ENCODE measurements at regions of chr11 and their contacts with region 1.

Region 1: GRCh38 chr11:44936525-44936924 is 14.2 kb downstream of the TP53I11 start:
- DNase-seq: peak; percentile 80

Region 2: DNA sequence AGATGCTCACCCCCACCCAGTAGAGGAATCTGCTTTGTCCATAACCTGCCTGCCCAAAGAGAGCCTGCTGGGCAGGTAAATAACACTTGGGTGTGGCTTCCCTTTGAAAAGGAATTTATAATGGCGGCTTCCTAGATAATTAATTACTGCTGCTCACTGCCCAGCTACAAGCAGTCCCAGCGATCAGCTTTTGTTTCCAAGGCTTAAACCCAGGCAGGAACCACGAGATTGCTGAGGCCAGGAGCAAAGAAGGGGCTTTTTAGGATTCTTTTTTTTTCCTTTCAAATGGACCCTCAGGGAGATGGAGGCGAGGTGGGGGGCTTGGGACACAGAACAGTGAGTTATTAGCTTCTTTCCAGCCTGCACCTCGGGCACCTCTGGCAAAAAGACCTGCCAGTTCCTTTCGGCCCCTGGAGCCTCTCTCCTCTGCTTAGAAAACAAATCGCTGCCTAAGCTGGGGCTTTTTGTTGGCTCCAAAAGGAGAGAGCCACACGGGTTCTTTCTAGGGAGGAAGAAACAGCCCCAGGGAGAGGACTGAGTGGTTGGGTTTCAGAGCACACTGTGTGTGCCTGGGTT is 102.6 kb before region 1 on chr11:
- CTCF ChIA-PET with region 1: no interaction called
- POLR2A ChIA-PET with region 1: no interaction called
- DNase-seq: no peak

Region 3: DNA sequence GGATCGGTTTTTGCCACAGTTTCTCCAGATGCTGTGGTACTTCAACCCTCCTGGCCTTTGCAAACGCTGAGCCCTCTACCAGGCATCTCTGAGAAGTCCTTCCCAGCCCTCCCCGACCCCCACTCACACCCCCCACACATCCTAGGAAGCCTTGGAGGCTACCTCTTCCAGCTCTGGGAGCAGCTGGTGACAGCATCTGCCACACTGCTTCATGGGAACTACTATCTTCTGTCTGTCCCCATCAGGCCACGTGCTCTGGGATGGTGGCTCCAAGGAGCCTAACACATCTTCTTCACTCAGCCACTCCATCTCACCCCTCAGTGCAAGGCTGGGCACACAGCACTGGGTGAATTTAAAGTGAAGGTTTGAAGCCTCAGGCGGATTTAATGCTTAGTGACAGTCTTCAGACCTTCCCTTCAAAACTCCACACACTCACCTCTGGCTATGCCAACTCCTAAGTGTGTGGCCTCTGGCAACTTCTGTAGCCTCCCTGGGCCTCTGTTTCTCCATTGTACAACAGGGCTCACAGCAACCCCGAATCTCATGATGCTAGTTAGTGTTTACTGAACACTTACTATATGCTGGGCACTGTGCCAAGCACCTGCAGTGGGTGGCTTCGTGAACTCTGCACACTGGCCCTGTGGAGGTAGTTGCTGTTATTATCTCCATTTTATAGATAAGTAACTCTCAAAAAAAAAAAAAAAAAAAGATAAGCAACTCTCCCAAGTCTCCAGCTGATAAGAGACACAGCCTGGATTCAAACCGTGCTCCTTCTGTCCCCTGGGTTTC is 21.4 kb after region 1 on chr11:
- CTCF ChIA-PET with region 1: interaction called, 11 read pairs
- POLR2A ChIA-PET with region 1: no interaction called
- DNase-seq: no peak

Region 4: DNA sequence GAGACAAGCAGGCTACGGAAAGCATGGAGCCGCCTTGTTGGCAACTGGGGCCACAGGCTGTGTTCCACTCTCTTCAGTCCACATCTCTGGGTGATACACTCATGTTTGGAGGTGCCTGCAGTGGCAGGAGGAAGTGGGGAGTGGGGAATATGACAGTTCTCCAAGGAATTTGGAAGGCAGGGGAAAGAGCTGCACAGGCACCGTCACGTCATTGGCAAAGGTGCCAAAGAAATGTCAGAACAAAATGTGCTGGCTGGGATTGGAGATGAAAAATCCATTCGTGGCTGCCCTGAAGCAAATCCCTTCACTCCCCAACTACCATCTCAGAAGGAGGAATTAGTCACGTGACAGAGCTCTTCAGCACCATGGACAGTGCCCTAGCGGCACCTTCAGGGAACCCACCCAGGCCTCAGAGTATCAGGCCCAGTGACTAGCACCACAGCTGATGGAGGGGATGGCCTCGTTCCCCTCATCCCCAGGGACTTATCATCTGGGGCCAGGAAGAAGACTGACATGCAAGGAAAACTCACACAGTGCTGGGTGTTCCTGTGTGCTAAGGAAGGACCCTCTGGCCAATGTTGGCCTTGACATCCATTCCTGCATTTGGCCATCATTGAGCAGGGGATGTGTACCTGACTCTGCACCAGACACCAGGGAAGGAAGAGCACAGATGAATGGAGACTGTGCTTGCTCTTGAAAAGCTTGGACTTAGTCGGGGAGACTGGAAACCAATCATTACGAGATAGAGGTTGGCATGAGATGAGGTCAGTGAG is 161.4 kb after region 1 on chr11:
- CTCF ChIA-PET with region 1: interaction called, 78 read pairs
- POLR2A ChIA-PET with region 1: no interaction called
- DNase-seq: peak; percentile 52

Region 5: GRCh38 chr11:45102810-45103621 is 166.5 kb after region 1 on chr11:
- CTCF ChIA-PET with region 1: interaction called, 78 read pairs
- POLR2A ChIA-PET with region 1: no interaction called
- DNase-seq: peak; percentile 73

Region 6: DNA sequence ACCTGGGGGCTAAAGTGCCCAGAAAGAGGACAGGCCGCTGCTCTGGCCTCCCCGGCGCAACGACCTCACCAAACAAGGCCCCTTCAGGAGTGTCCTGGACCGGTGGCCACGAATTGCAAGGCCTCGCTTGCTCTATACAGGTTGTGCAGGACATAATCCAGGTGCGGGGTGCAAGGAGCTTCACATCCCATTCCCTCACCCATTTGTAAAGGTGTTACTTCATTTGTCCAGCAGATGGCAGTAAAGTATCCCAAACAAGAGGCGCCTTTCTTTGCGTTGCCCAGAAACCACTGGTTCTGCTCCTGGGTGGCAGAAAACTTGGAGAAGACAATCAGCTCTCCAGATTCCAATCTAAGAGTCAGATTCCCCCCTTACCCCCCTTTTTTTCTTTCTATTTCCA is 174.0 kb after region 1 on chr11:
- CTCF ChIA-PET with region 1: interaction called, 78 read pairs
- POLR2A ChIA-PET with region 1: no interaction called
- DNase-seq: peak; percentile 69

Measured in HEK293T (cell line).